ENCODE measurements at regions of chr12 and their contacts with region 1.

Region 1: GRCh38 chr12:76031537-76032073 is at the start of gene PHLDA1:
- DNase-seq: peak; percentile 98
- total RNA-seq, gene PHLDA1: 99.4 TPM

Region 2: GRCh38 chr12:75623631-75624118 is 407.9 kb before region 1 on chr12:
- intact Hi-C with region 1: loop called (anchors 5 kb)
- DNase-seq: no peak

Region 3: GRCh38 chr12:75722714-75723200 is 308.8 kb before region 1 on chr12:
- intact Hi-C with region 1: loop called (anchors 2 kb)
- DNase-seq: no peak

Region 4: DNA sequence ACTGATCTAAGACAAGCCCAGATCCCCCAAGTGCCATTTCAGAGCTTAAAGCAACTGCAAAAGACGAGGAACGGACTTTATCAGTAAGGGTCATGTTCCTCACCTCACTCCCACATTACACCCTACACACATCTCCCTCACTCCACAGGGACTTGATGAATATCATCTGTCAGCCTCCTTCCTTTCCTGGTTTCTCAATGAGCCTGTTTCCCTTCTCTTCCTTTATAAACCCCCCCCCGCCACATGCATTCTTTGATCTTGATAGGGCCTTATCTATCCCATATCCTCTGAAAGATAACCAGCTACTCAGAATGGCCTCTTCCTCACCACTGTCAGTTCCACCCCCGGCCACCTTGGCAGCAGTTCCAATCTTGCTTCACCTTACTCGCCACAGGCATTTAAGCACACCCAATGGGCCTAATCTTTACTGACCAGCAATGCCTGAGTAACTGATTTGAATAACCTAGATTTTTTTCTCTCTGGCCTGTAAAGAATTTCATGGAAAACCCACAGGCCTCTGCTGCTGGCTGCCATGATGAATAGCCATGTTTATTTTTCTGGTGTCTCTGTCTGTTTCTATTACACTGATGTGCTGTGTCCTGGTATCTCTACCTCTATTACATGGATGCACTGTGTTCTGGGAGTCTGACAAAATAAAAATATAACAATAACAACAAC is 138.7 kb before region 1 on chr12:
- intact Hi-C with region 1: no loop called
- DNase-seq: no peak

Region 5: DNA sequence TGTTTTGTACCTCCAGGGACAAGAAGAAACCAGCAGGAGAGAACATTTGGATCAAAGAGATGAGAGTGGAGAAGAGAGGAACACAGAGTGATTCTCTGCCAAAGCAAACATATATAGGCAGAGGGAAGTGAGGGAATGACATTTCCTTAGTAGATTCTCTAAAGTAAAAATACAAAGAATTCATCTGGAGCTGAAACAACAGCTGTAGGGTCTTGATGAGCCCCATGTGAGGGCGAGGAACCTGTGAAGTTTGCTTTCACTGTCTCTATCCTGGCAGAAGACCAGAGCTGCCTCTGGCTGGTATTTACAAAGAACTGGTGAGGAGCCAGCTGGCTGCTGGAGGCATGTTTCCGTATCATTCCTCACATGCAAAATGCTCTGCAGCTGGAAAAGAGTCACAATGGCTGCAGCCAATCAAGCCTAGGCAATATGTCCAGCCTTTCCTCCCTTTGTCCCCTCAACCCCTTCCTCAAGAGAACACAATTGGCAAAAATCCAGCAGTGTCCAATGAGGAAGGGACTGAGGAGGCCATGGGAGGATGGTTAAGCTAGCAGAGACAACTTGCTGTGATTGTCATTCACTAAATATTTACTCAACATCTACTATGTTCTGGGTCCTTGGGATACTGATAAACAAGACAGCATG is 122.5 kb before region 1 on chr12:
- intact Hi-C with region 1: loop called (anchors 5 kb)
- DNase-seq: peak; percentile 87

Region 6: DNA sequence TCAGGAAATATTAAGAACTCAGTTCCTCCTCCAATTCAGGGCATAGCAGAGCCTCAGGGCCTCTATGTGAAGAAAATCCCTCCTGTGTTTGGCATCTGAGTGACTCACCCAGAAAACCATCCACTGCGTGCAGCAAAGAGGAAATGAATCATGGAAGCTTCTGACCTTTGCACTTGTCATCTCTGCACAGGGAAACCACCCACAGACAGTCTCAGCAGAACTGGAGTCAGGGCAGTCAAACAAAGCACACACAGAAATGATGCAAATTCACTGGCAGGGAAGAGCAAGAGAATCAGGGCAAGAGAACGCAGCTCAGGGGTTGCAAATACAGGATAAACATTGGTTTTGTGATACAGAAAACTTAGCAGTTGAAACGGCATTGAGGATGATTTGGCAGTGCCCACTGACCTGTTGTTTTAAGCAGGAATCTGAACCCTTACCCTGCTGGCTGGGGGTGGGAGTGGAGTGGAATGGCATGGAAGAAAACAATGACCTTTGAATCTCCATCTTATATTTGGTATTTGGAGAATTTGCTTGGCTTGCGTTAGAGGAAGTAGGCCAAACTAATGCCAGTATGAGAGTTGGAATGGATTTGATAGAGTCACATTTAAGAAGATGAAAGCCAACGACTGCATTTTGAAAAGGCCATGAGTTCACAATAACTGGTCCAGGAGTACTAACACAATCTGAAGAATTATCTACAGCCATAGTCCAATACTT is 53.5 kb before region 1 on chr12:
- intact Hi-C with region 1: loop called (anchors 2 kb)
- DNase-seq: peak; percentile 79

Region 7: DNA sequence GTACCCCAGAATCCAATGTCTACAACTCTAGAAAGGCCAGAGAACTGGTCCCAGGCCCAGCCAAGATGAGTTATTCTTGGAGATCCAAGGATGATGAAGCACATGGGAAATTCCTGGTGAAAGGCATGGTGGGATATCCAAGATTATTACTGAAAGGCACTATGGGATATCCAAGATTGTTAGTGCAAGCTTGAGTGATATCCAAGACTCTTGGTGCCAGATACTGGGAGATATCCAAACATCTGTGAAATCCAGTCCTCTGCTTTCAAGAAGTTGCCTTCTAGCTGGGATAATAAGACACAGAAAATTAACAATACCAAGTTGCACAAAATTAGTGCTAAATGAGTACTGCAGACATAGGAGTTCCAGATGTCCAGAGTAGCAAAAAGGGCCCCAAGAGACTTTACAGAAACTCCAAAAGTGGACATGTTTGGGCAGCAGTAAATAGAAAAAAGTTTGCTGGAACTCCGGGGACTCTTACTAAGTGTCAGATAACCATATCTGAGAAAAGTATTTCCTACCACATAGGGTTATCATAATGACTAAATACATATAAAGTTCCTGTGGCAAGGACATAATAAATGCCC is 34.7 kb before region 1 on chr12:
- intact Hi-C with region 1: no loop called
- DNase-seq: no peak

Region 8: DNA sequence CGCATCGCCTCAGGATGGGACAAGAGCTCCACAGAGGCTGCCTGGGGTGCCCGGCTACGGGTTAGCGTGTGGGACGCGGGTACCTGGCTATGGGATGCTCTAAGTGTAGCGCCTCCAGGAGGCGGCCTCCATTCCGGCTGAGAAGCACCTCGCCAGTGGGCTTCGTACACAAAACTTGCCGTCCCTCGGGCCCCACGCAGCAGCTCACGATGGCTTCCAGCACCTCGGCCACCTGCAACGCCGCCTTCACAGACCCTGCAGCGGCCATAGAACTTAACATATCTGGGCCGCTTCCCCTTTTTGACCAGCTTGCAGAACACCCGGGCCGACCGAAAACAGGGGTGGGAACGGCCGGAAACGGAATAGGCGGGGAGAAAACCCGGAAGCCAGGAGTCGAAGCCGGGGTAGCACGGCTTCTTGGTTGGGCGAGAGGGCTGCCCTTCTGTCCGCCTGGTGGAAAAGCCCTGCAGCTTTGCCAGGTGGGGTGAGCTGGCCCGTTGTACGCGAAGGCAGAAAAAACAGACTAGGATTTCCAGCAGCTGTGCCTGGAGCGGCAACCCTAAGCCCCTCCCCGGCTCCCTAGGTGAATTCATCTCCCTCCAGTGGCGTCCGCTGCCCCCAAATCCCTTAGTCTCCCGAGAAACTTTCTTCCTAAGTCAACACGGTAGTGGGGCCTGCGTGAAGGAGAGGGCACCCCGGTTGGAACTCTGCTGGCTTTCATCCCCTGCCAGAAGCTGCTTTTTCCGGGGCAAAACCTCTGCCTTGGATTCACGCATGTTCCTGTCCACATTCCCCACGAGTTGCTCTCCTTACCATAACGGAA is 316.7 kb after region 1 on chr12 and contains the start of gene BBS10:
- intact Hi-C with region 1: loop called (anchors 2 kb)
- DNase-seq: peak; percentile 98
- total RNA-seq, gene BBS10: 9.6 TPM

Region 9: GRCh38 chr12:76374386-76375020 is 342.9 kb after region 1 on chr12:
- intact Hi-C with region 1: no loop called
- DNase-seq: no peak

Region 10: DNA sequence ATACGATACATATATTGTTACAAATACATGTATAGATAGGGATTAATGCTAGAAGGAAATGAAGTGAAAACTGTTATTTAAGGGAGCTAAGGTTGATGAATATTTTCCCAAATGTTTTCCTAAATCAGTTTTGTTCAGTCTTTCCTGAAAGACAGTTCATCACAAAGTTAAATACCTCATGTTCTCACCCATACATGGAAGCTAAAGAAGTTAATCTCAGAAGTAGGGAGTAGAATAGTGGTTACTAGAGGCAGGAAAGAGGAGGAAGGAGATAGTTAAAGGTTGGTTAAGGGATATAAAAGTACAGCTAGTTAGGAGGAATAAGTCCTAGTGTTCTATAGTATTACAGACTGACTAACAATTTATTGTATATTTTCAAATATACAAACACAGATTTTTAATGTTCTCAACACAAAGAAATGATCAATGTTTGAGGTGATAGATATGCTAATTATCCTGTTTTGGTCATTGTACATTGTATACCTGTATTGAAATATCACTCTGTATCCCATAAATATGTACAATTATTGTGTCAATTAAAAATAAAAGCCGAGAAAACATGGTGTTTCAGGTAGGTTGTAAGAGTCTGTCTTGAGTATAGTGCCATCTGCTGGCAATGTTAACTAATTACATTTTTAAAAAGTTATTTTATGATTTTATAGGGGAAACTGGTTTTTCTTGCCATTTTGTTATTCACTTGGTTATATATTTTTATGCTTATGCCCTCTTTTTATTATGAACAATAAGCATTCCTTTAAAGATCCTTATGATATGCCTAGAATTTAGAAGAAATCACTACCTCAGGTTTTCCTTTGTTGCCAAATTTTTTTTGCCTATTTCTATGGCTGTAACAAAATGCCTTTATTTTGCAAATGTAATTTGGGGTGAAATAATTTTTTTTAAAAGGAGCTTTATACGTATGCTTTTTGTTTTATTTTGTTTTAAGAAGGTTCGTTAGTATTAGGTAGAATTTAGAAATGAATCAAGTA is 759.3 kb after region 1 on chr12:
- intact Hi-C with region 1: no loop called
- DNase-seq: no peak

Measured in cardiac septum (tissue), 1 donor.